Sciatic nerve (tissue), 2 donors: ENCODE measurements at regions of chr13 and their contacts with region 1.

Region 1: GRCh38 chr13:24160454-24161009 is at the start of gene SPATA13:
- DNase-seq: peak; percentile 97
- ATAC-seq: peak; percentile 99
- total RNA-seq, gene SPATA13: 49.8 TPM

Region 2: DNA sequence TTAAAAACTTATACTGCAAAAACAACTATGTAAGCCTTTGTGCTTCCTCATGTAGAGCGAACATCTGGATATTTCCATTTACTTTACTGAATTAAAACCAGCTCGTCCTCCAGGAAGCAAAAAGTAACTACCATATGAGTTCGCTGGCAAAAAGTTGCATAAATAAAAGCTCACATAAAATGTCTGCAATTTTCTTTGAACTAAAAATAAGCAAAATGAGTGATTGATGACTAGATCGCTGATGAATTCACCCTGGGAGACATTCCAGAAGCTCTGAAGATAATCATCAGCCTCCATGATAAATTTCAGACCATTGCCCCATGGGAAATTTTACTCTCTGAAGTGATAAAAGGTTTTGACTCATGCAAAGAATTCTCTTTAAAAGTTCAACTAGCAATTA is 659.7 kb before region 1 on chr13:
- intact Hi-C with region 1: no loop called
- DNase-seq: no peak
- ATAC-seq: no peak

Region 3: DNA sequence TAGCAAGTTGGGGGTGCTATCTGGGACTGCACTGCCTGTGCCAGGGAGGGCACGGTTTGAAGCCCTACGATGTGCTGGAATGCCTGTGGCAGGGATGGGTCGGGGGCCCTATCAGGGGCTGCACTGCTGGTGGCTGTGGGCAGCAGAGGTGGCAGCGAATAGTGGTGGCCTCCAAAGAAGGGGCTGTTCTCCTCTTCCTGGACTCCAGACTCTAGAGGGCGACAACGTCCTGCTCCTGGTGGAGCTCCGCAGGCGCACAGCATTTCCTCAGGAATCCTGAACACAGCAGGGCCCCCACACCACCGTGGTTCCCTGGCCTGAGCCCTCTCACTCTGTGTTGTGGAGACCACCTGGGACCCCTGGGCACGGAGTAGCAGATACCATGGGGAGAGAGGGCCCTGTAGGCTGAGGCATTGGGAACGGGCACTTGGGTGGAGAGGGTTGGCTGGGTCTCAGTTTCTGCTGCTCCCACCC is 444.7 kb before region 1 on chr13:
- intact Hi-C with region 1: no loop called
- DNase-seq: no peak
- ATAC-seq: peak; percentile 27

Region 4: DNA sequence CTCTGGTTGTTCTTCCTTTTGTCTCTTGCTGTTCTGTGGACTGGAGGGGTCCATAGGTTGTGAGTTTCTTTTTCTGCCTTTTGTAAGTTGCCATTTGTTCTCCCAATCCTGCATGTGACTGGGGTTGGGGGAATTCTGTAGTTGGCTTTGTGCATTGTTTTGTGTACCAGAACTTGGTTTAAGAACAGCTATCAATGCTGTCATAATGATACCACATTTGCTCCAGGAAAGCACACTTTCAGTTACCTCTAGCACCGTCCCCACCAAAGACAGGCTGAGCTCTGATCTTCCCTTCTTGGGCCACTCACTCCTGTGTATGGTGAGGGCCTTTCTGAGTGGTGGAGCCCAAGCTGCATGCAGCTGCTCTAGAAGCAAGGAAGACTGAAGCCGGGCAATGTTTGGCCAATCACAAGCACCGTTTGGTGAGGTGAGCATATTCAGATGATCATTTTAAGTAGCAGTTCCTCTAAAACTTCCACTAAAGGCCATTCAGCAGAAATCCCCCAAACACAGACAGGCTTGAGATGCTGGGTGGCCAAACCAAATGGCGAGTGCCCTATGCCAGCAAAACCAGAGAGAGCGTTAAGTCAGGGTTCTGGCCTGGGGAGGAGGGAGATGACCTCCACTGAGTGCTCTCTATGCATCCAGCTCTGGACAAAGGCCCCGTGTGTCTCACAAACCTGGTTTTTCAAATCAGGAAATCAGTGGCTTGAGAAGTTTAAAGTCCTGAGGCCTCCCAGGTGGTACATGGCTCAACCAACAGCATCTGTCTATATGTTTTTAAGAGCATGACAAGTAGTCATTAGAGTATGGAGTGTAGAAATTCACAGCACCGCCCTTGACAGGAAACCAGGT is 120.7 kb before region 1 on chr13:
- intact Hi-C with region 1: loop called (anchors 10 kb)
- DNase-seq: no peak
- ATAC-seq: no peak

Region 5: GRCh38 chr13:25365720-25366235 is 1205.2 kb after region 1 on chr13:
- intact Hi-C with region 1: no loop called
- DNase-seq: no peak
- ATAC-seq: no peak